CD8-positive, alpha-beta T cell (primary cell): ENCODE measurements at regions of chr10 and their contacts with region 1.

Region 1: DNA sequence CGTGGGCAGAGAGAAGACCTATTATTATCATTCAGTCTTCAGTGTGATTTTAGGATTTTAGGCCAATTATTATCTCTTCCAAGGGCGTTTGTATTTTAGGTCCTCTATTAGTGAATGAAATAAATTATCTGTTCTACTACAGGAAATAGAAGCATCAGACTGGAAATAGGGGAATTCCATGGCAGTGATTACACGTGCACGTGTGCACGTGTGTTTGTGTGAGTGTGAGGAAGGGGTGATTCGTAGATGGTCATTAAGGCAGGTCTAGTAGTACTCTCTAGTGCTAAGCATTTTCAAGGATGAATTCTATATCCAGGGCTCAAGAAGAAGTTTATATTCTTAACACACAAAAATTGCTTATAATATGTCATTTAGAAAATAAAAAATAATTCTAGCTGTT is 623.2 kb downstream of the GATA3 start:
- DNase-seq: no peak
- ATAC-seq: no peak
- H3K4me3 ChIP-seq: no peak overlapping the region
- H3K4me3 Mint-ChIP-seq: no peak overlapping the region
- H3K27ac ChIP-seq: no peak overlapping the region
- H3K27ac Mint-ChIP-seq: no peak overlapping the region
- H3K4me1 ChIP-seq: no peaks in the 10 kb centered on the region
- H3K4me1 Mint-ChIP-seq: no peaks in the 10 kb centered on the region
- H3K27me3 ChIP-seq: no peaks in the 10 kb centered on the region
- H3K27me3 Mint-ChIP-seq: peaks cover 5% of the 10 kb centered on the region
- CTCF ChIP-seq: no peak

Region 2: GRCh38 chr10:8159341-8160165 is 518.1 kb before region 1 on chr10:
- CTCF ChIA-PET with region 1: no interaction called
- POLR2A ChIA-PET with region 1: no interaction called
- intact Hi-C with region 1: no loop called
- DNase-seq: no peak
- ATAC-seq: no peak
- H3K4me3 ChIP-seq: no peak overlapping the region
- H3K4me3 Mint-ChIP-seq: no peak overlapping the region
- H3K27ac ChIP-seq: no peak overlapping the region
- H3K27ac Mint-ChIP-seq: no peak overlapping the region
- H3K4me1 ChIP-seq: no peaks in the 10 kb centered on the region
- H3K4me1 Mint-ChIP-seq: peaks cover 3% of the 10 kb centered on the region
- H3K27me3 ChIP-seq: no peaks in the 10 kb centered on the region
- H3K27me3 Mint-ChIP-seq: peaks cover 10% of the 10 kb centered on the region
- CTCF ChIP-seq: no peak

Region 3: DNA sequence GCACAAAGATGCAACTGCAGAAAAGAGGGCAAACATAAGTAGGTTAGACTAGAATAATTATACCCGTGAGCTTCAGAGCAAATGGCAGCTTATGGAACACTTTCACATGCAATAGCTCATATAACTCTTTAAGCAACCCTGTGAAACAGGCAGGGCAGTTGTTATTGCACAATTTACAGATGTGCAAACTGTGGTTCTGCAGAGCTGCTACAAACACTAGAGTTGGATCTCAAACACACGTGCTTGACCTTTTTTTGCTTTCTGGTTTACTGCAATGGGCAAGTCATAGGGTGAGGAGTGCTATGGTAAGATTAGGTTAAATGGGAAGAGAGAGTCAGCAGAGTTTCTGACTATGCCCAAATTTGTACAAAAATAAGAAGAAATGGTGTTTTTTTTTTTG is 12.3 kb before region 1 on chr10:
- CTCF ChIA-PET with region 1: no interaction called
- POLR2A ChIA-PET with region 1: no interaction called
- intact Hi-C with region 1: no loop called
- DNase-seq: no peak
- ATAC-seq: no peak
- H3K4me3 ChIP-seq: no peak overlapping the region
- H3K4me3 Mint-ChIP-seq: no peak overlapping the region
- H3K27ac ChIP-seq: no peak overlapping the region
- H3K27ac Mint-ChIP-seq: no peak overlapping the region
- H3K4me1 ChIP-seq: no peaks in the 10 kb centered on the region
- H3K4me1 Mint-ChIP-seq: no peaks in the 10 kb centered on the region
- H3K27me3 ChIP-seq: peaks cover 0 to 5% of the 10 kb centered on the region in 2 experiments
- H3K27me3 Mint-ChIP-seq: peaks cover 7% of the 10 kb centered on the region
- CTCF ChIP-seq: no peak

Region 4: GRCh38 chr10:8702166-8702565 is 24.5 kb after region 1 on chr10:
- CTCF ChIA-PET with region 1: no interaction called
- POLR2A ChIA-PET with region 1: no interaction called
- intact Hi-C with region 1: loop called in 1 of 2 experiments (anchors 2 kb)
- DNase-seq: no peak
- ATAC-seq: no peak
- H3K4me3 ChIP-seq: no peak overlapping the region
- H3K4me3 Mint-ChIP-seq: no peak overlapping the region
- H3K27ac ChIP-seq: no peak overlapping the region
- H3K27ac Mint-ChIP-seq: no peak overlapping the region
- H3K4me1 ChIP-seq: no peaks in the 10 kb centered on the region
- H3K4me1 Mint-ChIP-seq: no peaks in the 10 kb centered on the region
- H3K27me3 ChIP-seq: no peaks in the 10 kb centered on the region
- H3K27me3 Mint-ChIP-seq: peaks cover 2% of the 10 kb centered on the region
- CTCF ChIP-seq: no peak

Region 5: GRCh38 chr10:8712381-8713055 is 34.9 kb after region 1 on chr10:
- CTCF ChIA-PET with region 1: no interaction called
- POLR2A ChIA-PET with region 1: no interaction called
- intact Hi-C with region 1: no loop called
- DNase-seq: no peak
- ATAC-seq: no peak
- H3K4me3 ChIP-seq: no peak overlapping the region
- H3K4me3 Mint-ChIP-seq: no peak overlapping the region
- H3K27ac ChIP-seq: no peak overlapping the region
- H3K27ac Mint-ChIP-seq: no peak overlapping the region
- H3K4me1 ChIP-seq: no peaks in the 10 kb centered on the region
- H3K4me1 Mint-ChIP-seq: no peaks in the 10 kb centered on the region
- H3K27me3 ChIP-seq: peaks cover 0 to 2% of the 10 kb centered on the region in 2 experiments
- H3K27me3 Mint-ChIP-seq: peaks cover 6% of the 10 kb centered on the region
- CTCF ChIP-seq: no peak

Region 6: DNA sequence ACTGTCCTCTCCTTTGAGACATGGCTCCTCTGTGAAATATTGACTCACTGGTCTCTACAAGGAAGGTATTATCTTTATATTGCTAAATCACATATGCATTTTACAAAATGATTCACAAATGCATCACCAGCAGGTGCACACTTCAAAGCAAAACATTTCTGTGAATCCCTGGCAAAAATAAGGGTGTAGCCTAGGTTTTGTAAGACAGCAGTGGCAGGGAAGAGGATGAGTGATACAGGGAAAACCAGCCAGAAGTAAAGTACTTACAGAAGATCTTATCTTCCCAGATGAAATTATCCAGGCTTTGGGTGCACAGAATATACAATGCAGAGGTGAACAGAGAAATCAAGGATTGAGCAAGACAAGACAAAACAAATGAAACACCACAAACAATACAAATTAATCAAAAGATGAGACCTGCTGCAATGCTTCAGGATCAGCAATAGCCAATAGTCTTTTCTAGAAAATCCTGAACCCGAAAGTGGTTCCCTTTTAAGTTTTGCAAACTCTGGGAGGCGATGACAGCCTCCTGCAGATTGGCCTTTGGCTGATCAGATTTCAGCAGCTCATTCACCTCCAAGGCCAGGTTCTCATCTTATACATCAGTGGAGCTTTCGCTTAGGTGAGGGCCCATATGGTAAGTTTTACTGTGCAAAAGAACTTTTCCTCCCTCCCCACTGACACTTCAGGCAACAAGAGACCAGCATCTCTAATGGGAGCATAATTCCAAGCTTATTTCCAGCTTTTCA is 471.7 kb after region 1 on chr10:
- CTCF ChIA-PET with region 1: no interaction called
- POLR2A ChIA-PET with region 1: no interaction called
- intact Hi-C with region 1: no loop called
- DNase-seq: no peak
- ATAC-seq: no peak
- H3K4me3 ChIP-seq: no peak overlapping the region
- H3K4me3 Mint-ChIP-seq: no peak overlapping the region
- H3K27ac ChIP-seq: no peak overlapping the region
- H3K27ac Mint-ChIP-seq: no peak overlapping the region
- H3K4me1 ChIP-seq: no peaks in the 10 kb centered on the region
- H3K4me1 Mint-ChIP-seq: no peaks in the 10 kb centered on the region
- H3K27me3 ChIP-seq: no peaks in the 10 kb centered on the region
- H3K27me3 Mint-ChIP-seq: peaks cover 2% of the 10 kb centered on the region
- CTCF ChIP-seq: no peak